GM12878 (cell line): ENCODE measurements at regions of chr17 and their contacts with region 1.

Region 1: DNA sequence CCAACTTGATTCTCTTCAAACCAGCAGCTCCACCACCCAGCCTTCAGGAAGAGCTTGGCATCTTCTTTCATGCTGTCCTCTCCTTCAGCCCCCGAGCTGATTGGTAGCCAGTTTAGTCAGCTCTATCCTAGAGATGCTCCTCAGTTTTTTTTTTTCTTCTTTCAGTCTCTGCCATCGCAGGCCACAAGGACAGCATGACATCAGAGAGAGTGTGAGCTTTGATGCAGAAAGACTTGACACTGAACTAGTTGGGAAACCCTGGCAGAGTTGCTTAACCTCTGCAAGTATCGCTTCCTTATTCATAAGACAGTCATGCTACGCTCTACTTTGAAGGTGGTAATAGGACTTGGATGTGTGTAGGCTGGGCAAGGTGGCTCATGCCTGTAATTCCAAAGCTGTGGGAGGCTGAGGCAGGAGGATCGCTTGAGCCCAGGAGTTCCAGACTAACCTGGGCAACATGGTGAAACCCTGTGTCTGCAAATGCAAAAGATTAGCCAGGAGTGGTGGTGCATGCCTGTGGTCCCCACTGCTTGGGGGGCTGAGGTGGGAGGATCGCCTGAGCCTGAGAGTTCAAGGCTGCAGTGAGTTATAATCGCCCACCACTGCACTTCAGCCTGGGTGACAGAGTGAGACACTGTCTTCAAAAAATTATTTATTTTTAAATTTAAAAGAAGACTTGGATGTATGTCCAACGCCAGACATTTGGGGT is 2.6 kb downstream of the CD300LB start:
- DNase-seq: peak; percentile 76
- ATAC-seq: peak; percentile 91
- H3K4me3 ChIP-seq: no peak overlapping the region
- H3K27ac ChIP-seq: no peak overlapping the region
- H3K4me1 ChIP-seq: peaks cover 7% of the 10 kb centered on the region
- H3K27me3 ChIP-seq: peaks cover 0 to 1% of the 10 kb centered on the region in 2 experiments; a peak in 1 of 4 replicates
- CTCF ChIP-seq: no peak
- EP300 ChIP-seq: peak; percentile 37 to 71; a peak in 2 of 4 replicates
- POLR2A ChIP-seq: no peak
- RAD21 ChIP-seq: no peak

Region 2: GRCh38 chr17:74059479-74060240 is 469.0 kb before region 1 on chr17:
- CTCF ChIA-PET with region 1: no interaction called
- POLR2A ChIA-PET with region 1: no interaction called
- RAD21 ChIA-PET with region 1: no interaction called
- SMC1A ChIA-PET with region 1: no interaction called
- in situ Hi-C with region 1: no loop called
- intact Hi-C with region 1: no loop called
- DNase-seq: no peak
- ATAC-seq: no peak
- H3K4me3 ChIP-seq: no peak overlapping the region
- H3K27ac ChIP-seq: no peak overlapping the region
- H3K4me1 ChIP-seq: no peaks in the 10 kb centered on the region
- H3K27me3 ChIP-seq: peaks cover 2 to 4% of the 10 kb centered on the region in 2 experiments; a peak in 2 of 4 replicates
- CTCF ChIP-seq: no peak
- EP300 ChIP-seq: no peak
- POLR2A ChIP-seq: no peak
- RAD21 ChIP-seq: no peak

Region 3: GRCh38 chr17:74303305-74303704 is 225.3 kb before region 1 on chr17:
- CTCF ChIA-PET with region 1: interaction called, 11 read pairs
- POLR2A ChIA-PET with region 1: interaction called, 3 read pairs
- RAD21 ChIA-PET with region 1: interaction called, 3 read pairs
- SMC1A ChIA-PET with region 1: no interaction called
- in situ Hi-C with region 1: no loop called
- intact Hi-C with region 1: loop called (anchors 5 kb)
- DNase-seq: no peak
- ATAC-seq: no peak
- H3K4me3 ChIP-seq: no peak overlapping the region
- H3K27ac ChIP-seq: no peak overlapping the region
- H3K4me1 ChIP-seq: no peaks in the 10 kb centered on the region
- H3K27me3 ChIP-seq: no peaks in the 10 kb centered on the region
- CTCF ChIP-seq: no peak
- EP300 ChIP-seq: no peak
- POLR2A ChIP-seq: no peak
- RAD21 ChIP-seq: no peak

Region 4: GRCh38 chr17:74368092-74369081 is 160.3 kb before region 1 on chr17:
- CTCF ChIA-PET with region 1: interaction called, 68 read pairs
- POLR2A ChIA-PET with region 1: no interaction called
- RAD21 ChIA-PET with region 1: interaction called, 31 read pairs
- SMC1A ChIA-PET with region 1: interaction called, 38 read pairs
- in situ Hi-C with region 1: no loop called
- intact Hi-C with region 1: loop called (anchors 2 kb)
- DNase-seq: no peak
- ATAC-seq: peak; percentile 93
- H3K4me3 ChIP-seq: no peak overlapping the region
- H3K27ac ChIP-seq: no peak overlapping the region
- H3K4me1 ChIP-seq: peaks cover 7% of the 10 kb centered on the region
- H3K27me3 ChIP-seq: no peaks in the 10 kb centered on the region; a peak in 3 of 4 replicates
- CTCF ChIP-seq: peak; percentile 93 to 97 (median 94)
- EP300 ChIP-seq: no peak
- POLR2A ChIP-seq: no peak
- RAD21 ChIP-seq: peak; percentile 73

Region 5: DNA sequence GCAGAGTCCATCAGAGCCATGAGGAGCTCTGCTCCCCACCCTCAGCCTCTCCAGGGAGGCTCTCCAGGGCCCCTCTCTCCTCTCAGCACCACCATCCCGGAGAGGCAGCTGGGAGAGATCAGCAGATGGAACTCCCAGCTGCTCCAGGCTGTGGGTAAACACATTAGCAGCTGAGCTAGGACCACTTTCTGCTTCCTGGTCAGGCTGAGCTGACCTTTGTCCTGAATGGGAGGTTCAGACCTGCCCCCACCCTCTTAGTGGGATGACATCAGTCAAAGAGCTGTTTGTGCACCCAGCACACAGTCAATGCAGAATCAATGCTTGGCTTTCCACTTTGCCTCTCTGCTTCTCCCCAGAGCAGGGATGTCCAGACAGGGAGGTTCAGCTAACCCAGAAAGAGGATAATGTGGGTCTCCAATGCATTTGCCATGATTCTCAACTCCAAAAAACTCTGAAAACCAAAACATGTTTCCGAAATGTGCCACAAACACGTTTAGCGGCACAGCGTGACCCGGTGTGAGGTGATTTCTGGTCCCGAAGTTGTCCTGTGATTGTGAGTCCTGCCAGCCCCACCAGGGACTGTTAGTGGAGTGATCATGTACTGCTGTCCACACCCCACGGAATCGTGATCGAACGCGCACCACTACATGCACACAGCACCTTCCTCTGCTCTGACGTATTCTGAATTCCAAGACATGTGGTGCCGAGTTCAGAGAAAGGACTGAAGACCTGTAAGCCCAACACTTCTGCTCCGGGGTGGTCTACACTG is 154.6 kb before region 1 on chr17:
- CTCF ChIA-PET with region 1: interaction called, 68 read pairs
- POLR2A ChIA-PET with region 1: no interaction called
- RAD21 ChIA-PET with region 1: interaction called, 45 read pairs
- SMC1A ChIA-PET with region 1: interaction called, 38 read pairs
- in situ Hi-C with region 1: no loop called
- intact Hi-C with region 1: loop called (anchors 2 kb)
- DNase-seq: no peak
- ATAC-seq: no peak
- H3K4me3 ChIP-seq: no peak overlapping the region
- H3K27ac ChIP-seq: no peak overlapping the region
- H3K4me1 ChIP-seq: peaks cover under 1% of the 10 kb centered on the region
- H3K27me3 ChIP-seq: no peaks in the 10 kb centered on the region
- CTCF ChIP-seq: no peak
- EP300 ChIP-seq: no peak
- POLR2A ChIP-seq: no peak
- RAD21 ChIP-seq: no peak

Region 6: DNA sequence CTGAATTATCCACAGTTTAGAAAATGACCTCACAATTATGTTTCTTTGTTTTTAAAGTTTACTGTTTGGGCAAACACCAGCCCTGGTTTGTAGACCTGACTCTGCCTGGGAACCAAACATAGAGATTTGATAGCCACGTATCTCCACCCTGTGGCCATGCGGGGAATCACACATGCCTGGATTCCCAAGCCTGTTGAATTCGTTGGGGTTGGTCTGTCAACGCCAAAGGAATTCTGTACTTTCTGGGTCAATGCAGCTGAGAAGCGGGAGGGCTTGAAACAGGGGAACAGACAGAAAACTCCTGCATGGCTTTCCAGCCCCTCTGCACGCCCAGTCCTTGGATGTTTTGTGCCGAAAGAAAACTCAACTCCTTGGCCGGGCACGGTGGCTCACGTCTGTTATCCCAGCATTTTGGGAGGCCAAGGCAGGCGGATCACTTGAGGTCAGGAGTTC is 35.2 kb before region 1 on chr17:
- CTCF ChIA-PET with region 1: interaction called, 33 read pairs
- POLR2A ChIA-PET with region 1: interaction called, 3 read pairs
- RAD21 ChIA-PET with region 1: interaction called, 3 read pairs
- SMC1A ChIA-PET with region 1: interaction called, 7 read pairs
- in situ Hi-C with region 1: no loop called
- intact Hi-C with region 1: no loop called
- DNase-seq: peak; percentile 28
- ATAC-seq: peak; percentile 92
- H3K4me3 ChIP-seq: no peak overlapping the region
- H3K27ac ChIP-seq: no peak overlapping the region
- H3K4me1 ChIP-seq: no peaks in the 10 kb centered on the region
- H3K27me3 ChIP-seq: no peaks in the 10 kb centered on the region
- CTCF ChIP-seq: peak; percentile 93 to 95 (median 94); a peak in 5 of 6 replicates
- EP300 ChIP-seq: no peak
- POLR2A ChIP-seq: no peak
- RAD21 ChIP-seq: peak; percentile 98

Region 7: DNA sequence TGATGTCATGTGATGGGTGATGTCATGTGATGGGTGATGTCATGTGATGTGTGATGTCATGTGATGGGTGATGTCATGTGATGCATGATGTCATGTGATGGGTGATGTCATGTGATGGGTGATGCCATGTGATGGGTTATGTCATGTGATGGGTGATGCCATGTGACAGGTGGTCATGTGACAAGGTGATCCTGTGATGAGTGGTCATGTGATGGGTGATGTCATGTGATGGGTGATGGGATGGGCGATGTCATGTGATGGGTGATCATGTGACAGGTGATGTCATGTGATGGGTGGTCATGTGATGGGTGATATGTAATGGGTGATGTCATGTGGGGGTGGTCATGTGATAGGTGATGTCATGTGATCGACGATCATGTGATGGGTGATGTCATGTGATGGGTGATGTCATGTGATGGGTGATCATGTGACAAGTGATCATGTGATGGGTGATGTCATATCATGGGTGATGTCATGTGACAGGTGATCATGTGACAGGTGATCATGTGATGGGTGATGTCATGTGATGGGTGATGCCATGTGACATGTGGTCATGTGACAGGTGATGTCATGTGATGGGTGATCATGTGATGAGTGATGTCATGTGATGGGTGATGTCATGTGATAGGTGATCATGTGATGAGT is 14.5 kb before region 1 on chr17:
- CTCF ChIA-PET with region 1: interaction called, 14 read pairs
- POLR2A ChIA-PET with region 1: interaction called, 9 read pairs
- RAD21 ChIA-PET with region 1: interaction called, 22 read pairs
- SMC1A ChIA-PET with region 1: interaction called, 45 read pairs
- in situ Hi-C with region 1: no loop called
- intact Hi-C with region 1: no loop called
- DNase-seq: peak; percentile 73
- ATAC-seq: no peak
- H3K4me3 ChIP-seq: no peak overlapping the region
- H3K27ac ChIP-seq: no peak overlapping the region
- H3K4me1 ChIP-seq: 0 out of 2 replicates have a peak, but pooled peaks cover 7% of the 10 kb centered on the region
- H3K27me3 ChIP-seq: no peaks in the 10 kb centered on the region
- CTCF ChIP-seq: no peak
- EP300 ChIP-seq: no peak; a peak in 2 of 4 replicates
- POLR2A ChIP-seq: no peak
- RAD21 ChIP-seq: no peak

Region 8: DNA sequence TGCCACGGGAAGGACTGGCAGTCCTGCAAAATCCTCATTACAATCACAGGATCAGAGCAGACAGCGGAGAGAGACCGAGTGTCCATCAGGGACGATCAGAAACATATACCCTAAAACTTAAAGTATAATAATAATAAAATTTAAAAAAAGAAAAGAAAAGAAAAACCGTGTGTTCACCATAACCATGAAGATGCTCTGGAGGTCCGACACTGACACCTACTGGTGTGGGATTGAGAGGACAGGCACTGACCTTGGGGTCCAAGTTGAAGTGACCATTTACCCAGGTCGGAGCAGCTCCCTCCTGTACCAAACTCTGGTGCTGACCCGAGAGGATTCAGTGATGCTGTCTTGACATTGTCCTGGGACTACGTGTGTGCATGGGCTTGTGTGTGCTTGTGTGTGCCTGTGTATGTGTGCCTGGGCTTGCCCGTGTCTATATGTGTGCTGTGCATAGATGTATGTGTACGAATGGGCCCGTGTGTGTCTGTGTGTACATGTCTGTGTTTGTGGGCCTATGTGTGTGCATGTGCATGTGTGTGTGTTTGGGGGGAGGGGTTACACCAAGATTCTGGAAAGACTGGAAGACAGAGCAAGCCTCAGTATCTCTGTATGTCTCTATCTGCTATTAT is 73.4 kb after region 1 on chr17:
- CTCF ChIA-PET with region 1: interaction called, 16 read pairs
- POLR2A ChIA-PET with region 1: no interaction called
- RAD21 ChIA-PET with region 1: no interaction called
- SMC1A ChIA-PET with region 1: interaction called, 6 read pairs
- in situ Hi-C with region 1: no loop called
- intact Hi-C with region 1: no loop called
- DNase-seq: no peak
- ATAC-seq: peak; percentile 85
- H3K4me3 ChIP-seq: no peak overlapping the region
- H3K27ac ChIP-seq: no peak overlapping the region
- H3K4me1 ChIP-seq: no peaks in the 10 kb centered on the region; the same call in 1 of the 2 replicates
- H3K27me3 ChIP-seq: peaks cover 2 to 4% of the 10 kb centered on the region in 2 experiments; a peak in 3 of 4 replicates
- CTCF ChIP-seq: peak; percentile 67 to 71 (median 70)
- EP300 ChIP-seq: no peak
- POLR2A ChIP-seq: no peak
- RAD21 ChIP-seq: peak; percentile 73